Activated CD8-positive, alpha-beta T cell treated with anti-CD3 and anti-CD28 coated beads for 36 hours (primary cell): ENCODE measurements at regions of chr19 and their contacts with region 1.

Region 1: GRCh38 chr19:46840136-46840942 is 10.3 kb downstream of the AP2S1 start:
- DNase-seq: peak; percentile 68
- ATAC-seq: peak; percentile 93
- H3K4me3 Mint-ChIP-seq: no peak overlapping the region
- H3K27ac Mint-ChIP-seq: peak overlapping the region; percentile 38
- H3K4me1 Mint-ChIP-seq: no peaks in the 10 kb centered on the region
- H3K27me3 Mint-ChIP-seq: no peaks in the 10 kb centered on the region
- CTCF ChIP-seq: peak; percentile 89

Region 2: GRCh38 chr19:46746281-46747013 is 93.9 kb before region 1 on chr19 and contains the start of gene STRN4:
- CTCF ChIA-PET with region 1: interaction called, 147 read pairs
- POLR2A ChIA-PET with region 1: interaction called, 3 read pairs
- intact Hi-C with region 1: no loop called
- DNase-seq: peak; percentile 63
- ATAC-seq: peak; percentile 81
- H3K4me3 Mint-ChIP-seq: peak within 1 kb of the TSS; percentile 91
- H3K27ac Mint-ChIP-seq: peak within 1 kb of the TSS; percentile 88
- H3K4me1 Mint-ChIP-seq: peaks cover 47% of the 10 kb centered on the region
- H3K27me3 Mint-ChIP-seq: no peaks in the 10 kb centered on the region
- CTCF ChIP-seq: no peak
- total RNA-seq, gene STRN4: 52.5 to 63.5 TPM

Region 3: DNA sequence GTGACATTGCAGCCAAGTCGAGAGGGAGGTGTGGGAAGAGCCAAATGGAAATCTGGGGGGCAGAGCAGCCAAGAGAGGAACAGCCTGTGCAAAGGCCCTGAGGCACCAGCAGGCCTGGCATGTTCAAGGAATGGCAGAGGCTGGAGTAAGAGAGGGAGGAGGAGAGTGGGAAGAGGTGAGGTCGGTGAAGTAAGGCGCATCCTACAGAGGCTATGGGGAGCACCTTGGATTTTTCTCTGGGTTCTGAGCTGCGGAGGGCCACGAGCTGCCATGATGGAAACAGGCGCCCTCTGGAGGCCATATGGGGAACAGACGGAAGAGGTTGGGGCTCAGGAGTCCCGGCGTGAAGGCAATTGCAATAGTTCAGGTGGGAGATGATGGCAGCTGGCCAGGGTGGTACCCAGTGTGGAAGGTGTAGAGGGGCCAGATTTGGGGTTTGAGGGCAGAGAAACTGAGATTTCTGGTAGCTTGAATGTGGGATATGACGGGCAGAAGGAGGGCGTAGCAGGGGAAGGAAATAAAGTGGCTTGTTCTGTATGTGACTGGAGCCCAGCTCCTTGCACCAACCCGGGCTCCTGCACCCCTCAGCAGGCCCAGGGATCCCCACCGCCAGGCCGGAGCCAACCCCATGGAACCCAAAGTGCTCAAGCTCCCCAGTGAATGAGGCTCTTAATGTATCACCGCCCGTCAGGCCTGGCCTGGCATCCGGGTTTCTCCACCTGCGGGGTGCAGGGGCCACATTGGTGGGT is 73.6 kb before region 1 on chr19:
- CTCF ChIA-PET with region 1: interaction called, 17 read pairs
- POLR2A ChIA-PET with region 1: no interaction called
- intact Hi-C with region 1: no loop called
- DNase-seq: peak; percentile 79
- ATAC-seq: peak; percentile 96
- H3K4me3 Mint-ChIP-seq: no peak overlapping the region
- H3K27ac Mint-ChIP-seq: no peak overlapping the region
- H3K4me1 Mint-ChIP-seq: no peaks in the 10 kb centered on the region
- H3K27me3 Mint-ChIP-seq: no peaks in the 10 kb centered on the region
- CTCF ChIP-seq: peak; percentile 81

Region 4: GRCh38 chr19:46821498-46822409 is 18.6 kb before region 1 on chr19:
- CTCF ChIA-PET with region 1: interaction called, 29 read pairs
- POLR2A ChIA-PET with region 1: no interaction called
- intact Hi-C with region 1: no loop called
- DNase-seq: peak; percentile 80
- ATAC-seq: peak; percentile 85
- H3K4me3 Mint-ChIP-seq: peak overlapping the region; percentile 25
- H3K27ac Mint-ChIP-seq: peak overlapping the region; percentile 74
- H3K4me1 Mint-ChIP-seq: peaks cover 41% of the 10 kb centered on the region
- H3K27me3 Mint-ChIP-seq: no peaks in the 10 kb centered on the region
- CTCF ChIP-seq: no peak

Region 5: GRCh38 chr19:46850228-46851203 is 10.2 kb after region 1 on chr19 and contains the start of gene AP2S1:
- CTCF ChIA-PET with region 1: interaction called, 12 read pairs
- POLR2A ChIA-PET with region 1: no interaction called
- intact Hi-C with region 1: no loop called
- DNase-seq: peak; percentile 96
- ATAC-seq: peak; percentile 99
- H3K4me3 Mint-ChIP-seq: peak within 1 kb of the TSS; percentile 98
- H3K27ac Mint-ChIP-seq: peak within 1 kb of the TSS; percentile 85
- H3K4me1 Mint-ChIP-seq: peaks cover 15% of the 10 kb centered on the region
- H3K27me3 Mint-ChIP-seq: no peaks in the 10 kb centered on the region
- CTCF ChIP-seq: no peak
- total RNA-seq, gene AP2S1: 101 to 105 TPM

Region 6: GRCh38 chr19:47047763-47048405 is 207.5 kb after region 1 on chr19:
- CTCF ChIA-PET with region 1: no interaction called
- POLR2A ChIA-PET with region 1: no interaction called
- intact Hi-C with region 1: no loop called
- DNase-seq: peak; percentile 93
- ATAC-seq: peak; percentile 69
- H3K4me3 Mint-ChIP-seq: peak overlapping the region; percentile 99
- H3K27ac Mint-ChIP-seq: peak overlapping the region; percentile 90
- H3K4me1 Mint-ChIP-seq: peaks cover 12% of the 10 kb centered on the region
- H3K27me3 Mint-ChIP-seq: no peaks in the 10 kb centered on the region
- CTCF ChIP-seq: no peak

Region 7: DNA sequence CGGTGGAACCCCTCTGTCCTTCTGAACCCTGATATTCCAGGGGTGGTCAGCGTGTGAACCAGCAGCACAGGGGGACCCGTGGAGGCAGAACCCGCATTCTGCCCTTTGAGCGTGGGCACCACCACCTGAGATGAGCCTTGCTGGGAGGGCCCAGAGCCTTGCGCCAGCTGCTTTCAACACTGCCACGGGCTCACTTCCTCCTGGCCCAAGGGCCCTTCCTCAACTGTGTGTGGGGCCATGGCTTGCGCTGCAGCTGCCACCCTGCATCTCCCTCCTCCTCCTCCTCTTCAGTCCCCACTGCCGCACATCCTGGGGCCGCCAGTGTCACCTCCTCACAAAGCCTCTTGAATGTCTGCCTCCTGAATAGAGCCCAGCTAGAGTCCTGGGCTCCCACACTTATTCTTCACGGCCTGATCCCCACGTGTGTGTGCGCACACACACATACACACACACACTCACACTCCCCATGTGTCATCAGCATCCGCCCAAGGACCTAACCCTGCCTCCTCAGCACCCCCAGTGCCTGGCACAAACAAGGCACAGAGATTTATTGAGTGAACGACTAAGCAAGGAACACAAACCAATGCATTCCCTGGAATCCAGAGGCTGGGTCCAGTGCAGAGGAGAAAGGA is 235.0 kb after region 1 on chr19:
- CTCF ChIA-PET with region 1: no interaction called
- POLR2A ChIA-PET with region 1: no interaction called
- intact Hi-C with region 1: no loop called
- DNase-seq: no peak
- ATAC-seq: no peak
- H3K4me3 Mint-ChIP-seq: no peak overlapping the region
- H3K27ac Mint-ChIP-seq: no peak overlapping the region
- H3K4me1 Mint-ChIP-seq: peaks cover 4% of the 10 kb centered on the region
- H3K27me3 Mint-ChIP-seq: no peaks in the 10 kb centered on the region
- CTCF ChIP-seq: no peak